ENCODE measurements at regions of chr13 and their contacts with region 1.

Region 1: DNA sequence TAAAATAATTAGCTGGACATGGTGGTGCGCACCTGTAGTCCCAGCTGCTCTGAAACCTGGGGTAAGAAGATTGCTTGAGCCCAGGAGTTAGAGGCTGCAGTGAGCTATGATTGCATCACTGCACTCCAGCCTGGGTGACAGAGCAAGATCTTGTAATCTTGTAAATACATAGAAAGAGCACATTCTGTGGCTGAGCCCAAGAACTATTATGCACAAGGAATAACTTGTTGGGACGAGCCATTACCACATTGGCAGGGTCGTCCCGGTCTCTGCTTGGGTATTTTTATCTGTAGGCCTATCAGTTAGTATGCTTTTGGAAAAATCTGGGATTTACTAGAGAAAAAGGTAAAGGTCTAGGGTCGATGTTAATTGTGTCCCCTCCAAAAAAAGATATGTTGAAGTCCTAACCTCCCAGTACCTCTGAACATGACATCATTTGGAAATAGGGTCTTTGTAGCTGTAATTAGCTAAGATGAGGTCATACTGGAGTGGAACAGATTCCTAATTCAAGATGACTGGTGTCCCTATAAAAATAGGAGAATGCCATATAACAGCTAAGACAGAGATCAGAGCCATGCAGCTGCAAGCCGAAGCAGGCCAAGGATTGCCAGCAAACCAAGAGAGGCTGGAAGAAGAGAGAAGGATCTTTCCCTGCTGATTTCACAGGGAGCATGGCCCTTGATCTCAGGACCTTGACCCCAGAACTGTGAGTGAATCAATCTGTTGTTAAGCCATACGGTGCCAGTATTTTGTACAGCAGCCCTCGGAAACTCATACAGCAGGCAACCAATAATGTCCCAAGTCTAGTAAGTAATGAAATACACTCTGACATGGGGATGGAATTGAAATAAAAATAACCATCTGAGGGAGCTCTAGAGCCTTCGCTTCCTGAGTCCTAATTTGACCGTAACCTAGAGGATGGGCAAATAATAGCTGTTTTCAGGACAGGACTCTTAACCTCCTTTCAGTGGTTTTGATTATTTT is 77.0 kb downstream of the TM9SF2 start:
- DNase-seq: no peak
- H3K4me3 ChIP-seq: no peak overlapping the region
- H3K27ac ChIP-seq: no peak overlapping the region
- H3K4me1 ChIP-seq: no peaks in the 10 kb centered on the region; a peak in 1 of 7 replicates
- H3K27me3 ChIP-seq: no peaks in the 10 kb centered on the region
- CTCF ChIP-seq: peak in 2 of 3 experiments; percentile 25 to 31; a peak in 2 of 4 replicates
- EP300 ChIP-seq: no peak
- POLR2A ChIP-seq: no peak
- RAD21 ChIP-seq: peak; percentile 40 to 52

Region 2: GRCh38 chr13:99566125-99567083 is 11.8 kb before region 1 on chr13:
- CTCF ChIA-PET with region 1: interaction called, 12 read pairs
- POLR2A ChIA-PET with region 1: interaction called, 6 read pairs
- DNase-seq: no peak
- H3K4me3 ChIP-seq: no peak overlapping the region
- H3K27ac ChIP-seq: no peak overlapping the region
- H3K4me1 ChIP-seq: peaks cover 0 to 4% (median 1%) of the 10 kb centered on the region in 4 experiments; a peak in 1 of 7 replicates
- H3K27me3 ChIP-seq: no peaks in the 10 kb centered on the region
- CTCF ChIP-seq: no peak
- EP300 ChIP-seq: no peak
- POLR2A ChIP-seq: no peak
- RAD21 ChIP-seq: no peak

Region 3: DNA sequence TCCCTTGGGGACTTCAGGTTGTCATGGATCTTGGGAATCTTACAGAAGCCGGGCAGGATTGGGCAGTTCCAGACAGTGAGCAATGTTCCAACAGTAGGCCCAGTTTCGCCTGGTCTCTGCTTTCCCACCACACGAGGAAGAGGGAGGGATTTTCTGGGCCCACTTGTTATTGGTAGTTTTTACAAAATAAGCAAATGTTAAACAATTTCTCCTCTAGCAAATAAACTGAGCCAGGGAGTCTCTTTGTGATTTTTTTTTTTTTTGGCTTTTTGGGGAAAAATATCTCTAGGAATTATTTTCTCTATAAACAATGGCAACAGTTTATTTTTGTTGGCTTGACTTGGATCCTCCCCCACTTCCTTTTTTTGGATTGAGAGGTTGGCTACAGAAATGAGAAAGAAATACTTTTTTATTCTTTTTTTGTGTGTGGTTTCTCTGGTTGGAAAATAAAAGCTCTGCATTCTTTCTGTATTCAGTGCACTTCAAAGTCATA is 12.3 kb after region 1 on chr13:
- CTCF ChIA-PET with region 1: interaction called, 36 read pairs
- POLR2A ChIA-PET with region 1: no interaction called
- DNase-seq: no peak
- H3K4me3 ChIP-seq: no peak overlapping the region
- H3K27ac ChIP-seq: no peak overlapping the region
- H3K4me1 ChIP-seq: peaks cover 0 to 2% (median 0%) of the 10 kb centered on the region in 4 experiments; a peak in 1 of 7 replicates
- H3K27me3 ChIP-seq: no peaks in the 10 kb centered on the region
- CTCF ChIP-seq: no peak
- EP300 ChIP-seq: no peak
- POLR2A ChIP-seq: no peak
- RAD21 ChIP-seq: no peak

Region 4: GRCh38 chr13:99600318-99600717 is 22.1 kb after region 1 on chr13:
- CTCF ChIA-PET with region 1: interaction called, 19 read pairs
- POLR2A ChIA-PET with region 1: no interaction called
- DNase-seq: peak in 1 of 2 experiments; percentile 83
- H3K4me3 ChIP-seq: no peak overlapping the region
- H3K27ac ChIP-seq: no peak overlapping the region
- H3K4me1 ChIP-seq: peaks cover 3 to 9% (median 7%) of the 10 kb centered on the region in 4 experiments; a peak in 4 of 7 replicates
- H3K27me3 ChIP-seq: no peaks in the 10 kb centered on the region
- CTCF ChIP-seq: peak; percentile 83 to 89 (median 88)
- EP300 ChIP-seq: no peak
- POLR2A ChIP-seq: no peak
- RAD21 ChIP-seq: peak; percentile 89 to 92

Measured in H1 (cell line).